ENCODE measurements at regions of chr7 and their contacts with region 1.

Region 1: DNA sequence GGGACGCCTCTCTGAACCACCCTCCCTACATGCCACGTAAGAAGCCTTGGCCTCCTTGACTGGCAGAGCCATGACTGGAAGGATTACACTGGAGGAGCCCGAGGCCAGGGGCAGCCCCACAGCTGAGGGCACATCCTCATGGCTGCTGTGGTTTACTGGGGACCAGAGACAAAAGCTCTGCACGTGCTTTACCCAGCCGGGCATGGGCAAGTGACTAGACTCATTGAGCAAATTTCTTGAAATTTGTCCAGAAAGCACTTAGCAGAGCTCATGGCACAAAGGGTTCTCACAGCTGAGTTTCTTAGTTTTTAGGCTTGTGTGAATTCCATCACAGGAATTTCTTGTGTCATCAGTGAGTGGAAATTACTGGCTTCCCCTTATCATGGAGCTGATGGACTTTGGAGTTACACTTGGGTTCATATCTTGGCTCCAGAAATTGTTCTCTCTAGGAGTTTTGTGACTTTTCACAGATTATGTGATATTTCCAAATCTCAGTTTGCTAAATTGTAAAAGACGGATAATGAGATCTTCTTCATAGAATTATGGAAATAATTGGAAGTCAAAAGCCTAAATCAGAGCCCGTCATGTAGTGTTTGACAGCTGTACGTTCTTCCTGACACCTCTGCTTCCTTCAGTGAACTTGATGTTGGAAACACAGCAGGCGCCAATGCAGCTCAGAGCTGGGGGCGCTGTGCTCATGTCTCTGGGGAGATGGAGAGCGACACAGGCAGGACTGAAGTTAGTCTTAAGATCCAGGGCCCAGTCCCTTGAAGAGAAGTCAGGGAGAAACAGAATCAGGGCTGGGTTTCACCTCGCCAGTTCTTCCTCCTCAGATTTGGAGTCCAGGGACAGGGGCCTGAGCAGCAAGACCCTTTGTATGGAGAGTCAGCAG is 47.7 kb upstream of the MGAM2 start:
- DNase-seq: no peak
- H3K4me3 ChIP-seq: no peak overlapping the region
- H3K4me3 Mint-ChIP-seq: no peak overlapping the region
- H3K27ac ChIP-seq: no peak overlapping the region
- H3K27ac Mint-ChIP-seq: no peak overlapping the region
- H3K4me1 ChIP-seq: peaks cover 2 to 9% of the 10 kb centered on the region in 2 donors
- H3K4me1 Mint-ChIP-seq: peaks cover 16% of the 10 kb centered on the region
- H3K27me3 ChIP-seq: no peaks in the 10 kb centered on the region
- H3K27me3 Mint-ChIP-seq: peaks cover 0 to 2% (median 0%) of the 10 kb centered on the region in 3 donors
- CTCF ChIP-seq: no peak

Region 2: DNA sequence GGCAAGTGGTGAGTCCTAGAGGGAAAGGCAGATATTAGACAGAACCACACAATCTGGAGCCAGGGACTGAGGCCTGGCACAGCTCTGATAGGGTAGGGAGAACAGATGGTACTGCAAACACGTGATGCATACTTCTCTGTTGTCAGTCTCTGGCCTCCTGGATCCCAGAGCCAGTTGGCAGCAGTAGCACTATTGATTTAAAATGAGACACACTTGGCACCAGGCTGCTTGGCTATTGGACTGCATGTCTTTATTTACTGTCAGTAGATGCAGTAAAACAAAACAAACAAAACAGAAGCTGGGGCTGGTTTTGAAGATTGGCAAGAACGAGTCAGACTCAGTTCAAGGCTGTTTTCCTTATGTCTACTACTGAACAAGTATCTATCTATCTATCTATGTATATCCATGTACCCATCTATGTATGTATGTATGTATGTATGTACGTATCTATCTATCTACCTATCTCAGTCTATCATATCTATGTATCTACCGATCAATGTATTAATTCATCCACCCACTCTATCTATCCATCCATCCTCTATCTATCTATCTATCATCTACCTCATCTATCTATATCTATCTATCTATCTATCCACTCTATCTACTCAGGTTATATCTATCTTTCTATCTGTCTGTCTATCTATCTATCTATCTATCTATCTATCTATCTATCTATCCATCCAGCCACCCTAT is 24.4 kb after region 1 on chr7:
- intact Hi-C with region 1: loop called (anchors 1 kb)
- DNase-seq: no peak
- H3K4me3 ChIP-seq: no peak overlapping the region
- H3K4me3 Mint-ChIP-seq: no peak overlapping the region
- H3K27ac ChIP-seq: no peak overlapping the region
- H3K27ac Mint-ChIP-seq: no peak overlapping the region
- H3K4me1 ChIP-seq: no peaks in the 10 kb centered on the region
- H3K4me1 Mint-ChIP-seq: no peaks in the 10 kb centered on the region
- H3K27me3 ChIP-seq: no peaks in the 10 kb centered on the region
- H3K27me3 Mint-ChIP-seq: no peaks in the 10 kb centered on the region
- CTCF ChIP-seq: no peak

Region 3: DNA sequence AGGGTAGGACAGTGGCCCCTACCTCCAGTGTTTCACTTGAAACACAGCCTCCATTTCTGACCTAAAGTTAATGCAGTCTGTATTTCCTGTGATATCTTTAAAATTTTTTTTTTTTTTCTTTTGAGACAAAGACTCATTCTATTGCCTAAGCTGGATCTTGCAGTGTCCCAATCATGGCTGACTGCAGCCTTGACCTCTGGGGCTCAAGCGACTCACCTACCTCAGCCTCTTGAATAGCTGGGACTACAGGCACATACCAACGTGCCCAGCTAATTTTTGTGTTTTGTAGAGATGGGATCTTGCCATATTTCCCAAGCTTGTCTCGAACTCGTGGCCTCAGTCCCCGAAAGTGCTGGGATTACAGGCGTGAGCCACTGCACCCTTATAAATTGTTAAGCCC is 31.1 kb after region 1 on chr7:
- intact Hi-C with region 1: loop called in 1 of 2 experiments (anchors 1 kb)
- DNase-seq: no peak
- H3K4me3 ChIP-seq: no peak overlapping the region
- H3K4me3 Mint-ChIP-seq: no peak overlapping the region
- H3K27ac ChIP-seq: no peak overlapping the region
- H3K27ac Mint-ChIP-seq: no peak overlapping the region
- H3K4me1 ChIP-seq: peaks cover 7 to 11% of the 10 kb centered on the region in 2 donors
- H3K4me1 Mint-ChIP-seq: peaks cover 20% of the 10 kb centered on the region
- H3K27me3 ChIP-seq: no peaks in the 10 kb centered on the region
- H3K27me3 Mint-ChIP-seq: peaks cover 0 to 2% (median 0%) of the 10 kb centered on the region in 3 donors
- CTCF ChIP-seq: no peak